Vagina (tissue), 2 donors: ENCODE measurements at regions of chr6 and their contacts with region 1.

Region 1: DNA sequence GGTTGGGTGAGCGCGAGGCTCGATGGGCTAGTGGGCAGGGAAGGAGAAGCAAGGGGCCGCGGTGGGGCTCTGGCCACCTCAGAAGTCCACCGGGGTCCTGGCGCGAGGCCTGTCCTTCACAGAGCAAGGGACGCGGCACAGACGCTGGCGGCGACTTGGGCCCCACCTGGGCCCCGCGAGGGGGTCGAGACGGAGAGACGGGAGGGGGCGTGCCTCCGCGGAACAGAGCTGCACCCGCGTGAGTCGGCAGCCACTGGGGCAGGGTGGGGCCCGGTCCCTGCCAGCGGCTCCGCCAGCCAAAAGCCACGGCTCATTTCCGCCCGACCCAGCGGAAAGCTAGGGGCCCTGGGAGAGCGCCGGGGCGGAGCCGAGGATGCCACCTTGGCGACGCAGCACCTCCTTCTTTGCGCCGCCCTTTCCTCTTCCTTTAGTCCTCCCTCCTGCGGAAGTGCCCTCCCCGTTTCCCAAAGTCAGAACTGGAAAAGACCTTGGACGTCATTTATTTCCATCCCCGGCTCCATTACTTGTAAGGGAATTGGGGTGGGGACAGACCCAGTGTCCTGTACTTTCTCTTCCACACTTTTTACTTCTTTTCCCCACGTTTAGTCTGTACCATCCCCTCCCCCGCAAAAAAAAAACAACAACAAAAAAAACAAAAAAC is at the start of gene CUL7:
- DNase-seq: peak in 1 of 2 donors; percentile 94
- H3K4me3 ChIP-seq: peak within 1 kb of the TSS; percentile 62 to 71
- H3K27ac ChIP-seq: peak within 1 kb of the TSS; percentile 88
- H3K4me1 ChIP-seq: peaks cover 45% of the 10 kb centered on the region
- H3K27me3 ChIP-seq: no peaks in the 10 kb centered on the region
- CTCF ChIP-seq: no peak
- POLR2A ChIP-seq: peak in 1 of 2 donors; percentile 53
- total RNA-seq, gene CUL7: 13.0 TPM

Region 2: GRCh38 chr6:41488433-41489119 is 1565.1 kb before region 1 on chr6:
- intact Hi-C with region 1: no loop called
- DNase-seq: no peak
- H3K4me3 ChIP-seq: no peak overlapping the region
- H3K27ac ChIP-seq: no peak overlapping the region
- H3K4me1 ChIP-seq: peaks cover 22% of the 10 kb centered on the region
- H3K27me3 ChIP-seq: no peaks in the 10 kb centered on the region
- CTCF ChIP-seq: no peak
- POLR2A ChIP-seq: no peak

Region 3: DNA sequence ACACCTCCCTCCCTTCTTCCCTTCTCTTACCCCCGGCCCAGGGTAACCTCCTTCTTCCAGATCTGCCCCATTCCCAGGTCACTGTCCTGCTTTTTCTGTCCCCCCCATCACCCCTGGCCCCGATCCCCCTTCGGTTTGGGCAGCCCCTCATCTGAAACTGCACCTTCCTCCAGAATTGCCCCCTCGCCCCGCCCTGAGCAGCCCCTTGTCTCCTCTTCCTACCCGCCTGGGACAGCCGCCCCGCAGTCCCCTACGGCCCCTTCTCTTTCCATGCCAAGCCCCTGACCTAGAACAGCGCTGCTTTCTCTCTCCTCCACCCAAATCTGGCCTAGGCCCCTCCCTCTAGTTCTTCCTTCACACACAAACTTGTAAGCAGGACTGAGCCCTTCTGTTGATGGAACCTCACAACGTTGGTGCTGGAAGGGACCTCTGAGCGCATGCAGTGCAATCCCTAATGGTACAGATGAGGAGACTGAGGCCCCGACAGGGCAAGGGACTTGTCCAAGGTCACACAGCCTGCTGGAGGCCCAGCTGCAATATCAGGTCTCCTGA is 68.7 kb before region 1 on chr6:
- intact Hi-C with region 1: loop called (anchors 5 kb)
- DNase-seq: no peak
- H3K4me3 ChIP-seq: peak overlapping the region; percentile 95 to 96
- H3K27ac ChIP-seq: peak overlapping the region; percentile 90
- H3K4me1 ChIP-seq: peaks cover 62% of the 10 kb centered on the region
- H3K27me3 ChIP-seq: no peaks in the 10 kb centered on the region
- CTCF ChIP-seq: no peak
- POLR2A ChIP-seq: no peak